Activated CD8-positive, alpha-beta T cell treated with anti-CD3 and anti-CD28 coated beads for 36 hours (primary cell): ENCODE measurements at regions of chr2 and their contacts with region 1.

Region 1: GRCh38 chr2:10072656-10073480 is 7.3 kb downstream of the CYS1 start:
- DNase-seq: peak; percentile 86
- ATAC-seq: peak; percentile 97
- H3K4me3 Mint-ChIP-seq: no peak overlapping the region
- H3K27ac Mint-ChIP-seq: no peak overlapping the region
- H3K4me1 Mint-ChIP-seq: peaks cover 8% of the 10 kb centered on the region
- H3K27me3 Mint-ChIP-seq: peaks cover 39% of the 10 kb centered on the region
- CTCF ChIP-seq: peak; percentile 86

Region 2: GRCh38 chr2:9191041-9191481 is 881.8 kb before region 1 on chr2:
- CTCF ChIA-PET with region 1: no interaction called
- POLR2A ChIA-PET with region 1: no interaction called
- intact Hi-C with region 1: no loop called
- DNase-seq: no peak
- ATAC-seq: no peak
- H3K4me3 Mint-ChIP-seq: no peak overlapping the region
- H3K27ac Mint-ChIP-seq: no peak overlapping the region
- H3K4me1 Mint-ChIP-seq: no peaks in the 10 kb centered on the region
- H3K27me3 Mint-ChIP-seq: peaks cover 2% of the 10 kb centered on the region
- CTCF ChIP-seq: no peak

Region 3: GRCh38 chr2:10043906-10044601 is 28.8 kb before region 1 on chr2:
- CTCF ChIA-PET with region 1: interaction called, 10 read pairs
- POLR2A ChIA-PET with region 1: no interaction called
- intact Hi-C with region 1: no loop called
- DNase-seq: peak; percentile 95
- ATAC-seq: peak; percentile 82
- H3K4me3 Mint-ChIP-seq: peak overlapping the region; percentile 64
- H3K27ac Mint-ChIP-seq: peak overlapping the region; percentile 73
- H3K4me1 Mint-ChIP-seq: peaks cover 8% of the 10 kb centered on the region
- H3K27me3 Mint-ChIP-seq: peaks cover 2% of the 10 kb centered on the region
- CTCF ChIP-seq: no peak

Region 4: GRCh38 chr2:10057231-10058107 is 15.4 kb before region 1 on chr2:
- CTCF ChIA-PET with region 1: interaction called, 37 read pairs
- POLR2A ChIA-PET with region 1: no interaction called
- intact Hi-C with region 1: no loop called
- DNase-seq: peak; percentile 65
- ATAC-seq: peak; percentile 67
- H3K4me3 Mint-ChIP-seq: no peak overlapping the region
- H3K27ac Mint-ChIP-seq: no peak overlapping the region
- H3K4me1 Mint-ChIP-seq: peaks cover 6% of the 10 kb centered on the region
- H3K27me3 Mint-ChIP-seq: peaks cover 2% of the 10 kb centered on the region
- CTCF ChIP-seq: no peak

Region 5: DNA sequence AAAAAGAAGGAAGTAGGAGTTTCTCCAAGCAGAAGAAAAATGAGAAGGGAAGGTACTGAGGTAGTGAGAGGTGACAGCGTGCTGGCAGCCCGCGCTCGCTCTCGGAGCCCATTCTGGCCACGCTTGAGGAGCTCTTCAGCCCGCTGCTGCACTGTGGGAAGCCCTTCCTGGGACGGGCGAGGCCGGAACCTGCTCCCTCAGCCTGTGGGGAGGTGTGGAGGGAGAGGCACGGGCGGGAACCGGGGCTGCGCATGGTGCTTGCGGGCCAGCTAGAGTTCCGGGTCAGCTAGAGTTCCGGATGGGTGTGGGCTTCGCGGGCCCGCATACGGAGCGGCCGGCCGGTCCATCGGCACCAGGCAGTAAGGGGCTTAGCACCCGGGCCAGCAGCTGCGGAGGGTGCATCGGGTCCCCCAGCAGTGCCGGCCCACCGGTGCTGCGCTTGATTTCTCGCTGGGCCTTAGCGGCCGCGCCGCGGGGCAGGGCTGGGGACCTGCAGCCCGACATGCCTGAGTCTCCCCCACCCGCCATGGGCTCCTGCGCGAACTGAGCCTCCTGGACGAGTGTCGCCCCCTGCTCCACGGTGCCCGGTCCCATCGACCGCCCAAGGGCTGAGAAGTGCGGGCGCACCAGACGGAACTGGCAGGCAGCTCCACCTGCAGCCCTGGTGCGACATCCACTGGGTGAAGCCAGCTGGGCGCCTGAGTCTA is 18.5 kb after region 1 on chr2:
- CTCF ChIA-PET with region 1: interaction called, 178 read pairs
- POLR2A ChIA-PET with region 1: interaction called, 4 read pairs
- intact Hi-C with region 1: no loop called
- DNase-seq: peak; percentile 48
- ATAC-seq: peak; percentile 39
- H3K4me3 Mint-ChIP-seq: no peak overlapping the region
- H3K27ac Mint-ChIP-seq: no peak overlapping the region
- H3K4me1 Mint-ChIP-seq: peaks cover 3% of the 10 kb centered on the region
- H3K27me3 Mint-ChIP-seq: peaks cover 46% of the 10 kb centered on the region
- CTCF ChIP-seq: no peak

Region 6: GRCh38 chr2:10097352-10098148 is 24.7 kb after region 1 on chr2:
- CTCF ChIA-PET with region 1: interaction called, 178 read pairs
- POLR2A ChIA-PET with region 1: interaction called, 3 read pairs
- intact Hi-C with region 1: no loop called
- DNase-seq: peak; percentile 48
- ATAC-seq: peak; percentile 88
- H3K4me3 Mint-ChIP-seq: no peak overlapping the region
- H3K27ac Mint-ChIP-seq: no peak overlapping the region
- H3K4me1 Mint-ChIP-seq: no peaks in the 10 kb centered on the region
- H3K27me3 Mint-ChIP-seq: peaks cover 17% of the 10 kb centered on the region
- CTCF ChIP-seq: peak; percentile 91

Region 7: DNA sequence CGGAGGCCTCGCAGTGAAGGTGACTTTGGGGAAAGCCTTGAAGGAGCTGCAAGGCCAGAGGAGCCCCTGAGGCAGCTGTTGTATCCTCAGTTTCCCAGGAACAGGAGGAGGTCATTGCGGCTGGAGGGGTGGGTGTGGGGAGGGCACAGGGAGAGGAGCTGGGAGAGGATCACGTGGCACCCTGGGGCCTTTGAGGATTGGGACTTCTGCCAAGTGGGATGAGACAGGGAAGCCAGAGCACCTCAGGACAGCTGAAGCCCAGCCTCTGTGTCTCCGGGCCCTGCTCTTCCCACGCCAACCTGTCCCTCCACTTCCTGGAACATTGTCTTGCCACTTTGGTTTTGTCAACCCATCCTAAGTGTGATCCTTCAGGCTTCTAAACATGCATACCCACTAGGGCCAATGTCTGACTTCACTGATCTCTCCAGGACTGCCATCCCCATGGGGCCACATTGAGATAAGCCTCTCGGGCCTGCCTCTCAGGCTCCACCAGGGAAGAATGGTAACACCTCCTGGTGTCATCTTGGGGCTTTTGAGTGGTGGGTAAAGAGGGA is 30.4 kb after region 1 on chr2:
- CTCF ChIA-PET with region 1: interaction called, 178 read pairs
- POLR2A ChIA-PET with region 1: interaction called, 3 read pairs
- intact Hi-C with region 1: no loop called
- DNase-seq: no peak
- ATAC-seq: no peak
- H3K4me3 Mint-ChIP-seq: no peak overlapping the region
- H3K27ac Mint-ChIP-seq: no peak overlapping the region
- H3K4me1 Mint-ChIP-seq: no peaks in the 10 kb centered on the region
- H3K27me3 Mint-ChIP-seq: peaks cover 2% of the 10 kb centered on the region
- CTCF ChIP-seq: no peak